ENCODE measurements at regions of chr7 and their contacts with region 1.

Region 1: DNA sequence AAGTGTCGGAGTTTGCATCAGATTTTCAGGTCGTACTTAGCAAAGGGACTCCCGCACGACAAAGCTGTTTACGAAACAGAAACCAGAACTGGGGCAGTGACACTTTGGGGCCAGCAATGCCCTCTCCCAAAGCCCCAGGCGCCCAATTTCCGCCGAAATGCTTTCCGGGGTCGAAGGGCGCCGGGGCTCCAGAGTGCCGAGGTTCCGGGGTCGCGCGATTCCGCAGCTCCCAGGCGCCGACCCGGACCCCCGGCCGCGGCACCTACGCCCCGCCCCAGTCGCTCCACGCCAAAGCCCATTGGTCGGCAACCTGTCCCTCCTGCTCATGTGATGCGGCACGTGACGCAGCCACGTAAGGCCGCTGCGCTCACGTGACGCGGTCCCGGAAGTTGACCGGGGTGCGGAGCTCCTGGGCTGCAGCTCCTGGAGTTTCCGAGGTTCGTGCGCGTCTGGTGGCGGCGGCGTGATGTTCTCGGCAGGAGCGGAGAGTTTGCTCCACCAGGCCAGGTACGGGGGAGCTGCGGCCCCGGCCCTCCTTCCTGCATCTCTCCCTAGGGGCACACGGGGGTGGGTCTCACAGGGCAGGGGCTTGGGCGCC is at the start of gene AP5Z1:
- DNase-seq: peak; percentile 98
- H3K4me3 Mint-ChIP-seq: peak within 1 kb of the TSS; percentile 97
- H3K27ac Mint-ChIP-seq: peak within 1 kb of the TSS; percentile 96
- H3K4me1 Mint-ChIP-seq: peaks cover 24% of the 10 kb centered on the region
- H3K27me3 Mint-ChIP-seq: no peaks in the 10 kb centered on the region
- CTCF ChIP-seq: no peak
- total RNA-seq, gene AP5Z1: 66.1 and 70.7 TPM in 2 replicates

Region 2: GRCh38 chr7:4282434-4283223 is 492.7 kb before region 1 on chr7:
- CTCF ChIA-PET with region 1: no interaction called
- intact Hi-C with region 1: no loop called
- DNase-seq: peak; percentile 59
- H3K4me3 Mint-ChIP-seq: no peak overlapping the region
- H3K27ac Mint-ChIP-seq: no peak overlapping the region
- H3K4me1 Mint-ChIP-seq: no peaks in the 10 kb centered on the region
- H3K27me3 Mint-ChIP-seq: no peaks in the 10 kb centered on the region
- CTCF ChIP-seq: no peak

Region 3: DNA sequence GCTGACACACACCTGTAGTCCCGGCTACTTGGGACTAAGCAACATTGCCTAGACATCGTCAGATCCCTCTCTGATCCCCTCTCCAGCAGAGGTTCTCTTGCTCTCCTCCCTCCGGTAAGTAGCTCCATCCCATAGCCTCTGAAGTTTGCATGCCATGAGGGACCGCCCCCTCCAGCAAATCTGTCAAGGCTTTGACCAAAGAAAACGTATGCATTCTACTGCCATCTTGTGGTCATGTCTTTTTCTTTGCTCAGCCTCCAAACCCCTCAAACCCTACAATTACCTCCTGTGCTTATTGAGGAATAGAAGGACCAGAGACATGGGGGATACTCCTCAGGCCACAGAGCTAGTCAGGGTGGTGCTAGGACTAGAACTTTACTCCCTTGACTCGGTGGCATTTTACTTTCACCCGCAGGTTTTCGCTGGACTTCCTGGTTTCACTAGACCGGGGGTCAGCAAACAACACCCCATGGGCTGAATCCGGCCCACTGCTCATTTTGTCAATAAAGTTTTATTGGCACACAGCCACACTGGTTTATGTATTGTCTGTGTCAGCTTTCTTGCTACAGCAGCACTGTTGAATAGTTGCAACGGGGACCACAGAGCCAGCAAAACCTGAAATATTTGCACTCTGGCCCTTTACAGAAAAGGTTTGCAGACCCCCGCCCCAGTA is 295.8 kb before region 1 on chr7:
- CTCF ChIA-PET with region 1: no interaction called
- intact Hi-C with region 1: no loop called
- DNase-seq: peak; percentile 74
- H3K4me3 Mint-ChIP-seq: no peak overlapping the region
- H3K27ac Mint-ChIP-seq: no peak overlapping the region
- H3K4me1 Mint-ChIP-seq: no peaks in the 10 kb centered on the region
- H3K27me3 Mint-ChIP-seq: peaks cover 46% of the 10 kb centered on the region
- CTCF ChIP-seq: peak; percentile 65

Region 4: DNA sequence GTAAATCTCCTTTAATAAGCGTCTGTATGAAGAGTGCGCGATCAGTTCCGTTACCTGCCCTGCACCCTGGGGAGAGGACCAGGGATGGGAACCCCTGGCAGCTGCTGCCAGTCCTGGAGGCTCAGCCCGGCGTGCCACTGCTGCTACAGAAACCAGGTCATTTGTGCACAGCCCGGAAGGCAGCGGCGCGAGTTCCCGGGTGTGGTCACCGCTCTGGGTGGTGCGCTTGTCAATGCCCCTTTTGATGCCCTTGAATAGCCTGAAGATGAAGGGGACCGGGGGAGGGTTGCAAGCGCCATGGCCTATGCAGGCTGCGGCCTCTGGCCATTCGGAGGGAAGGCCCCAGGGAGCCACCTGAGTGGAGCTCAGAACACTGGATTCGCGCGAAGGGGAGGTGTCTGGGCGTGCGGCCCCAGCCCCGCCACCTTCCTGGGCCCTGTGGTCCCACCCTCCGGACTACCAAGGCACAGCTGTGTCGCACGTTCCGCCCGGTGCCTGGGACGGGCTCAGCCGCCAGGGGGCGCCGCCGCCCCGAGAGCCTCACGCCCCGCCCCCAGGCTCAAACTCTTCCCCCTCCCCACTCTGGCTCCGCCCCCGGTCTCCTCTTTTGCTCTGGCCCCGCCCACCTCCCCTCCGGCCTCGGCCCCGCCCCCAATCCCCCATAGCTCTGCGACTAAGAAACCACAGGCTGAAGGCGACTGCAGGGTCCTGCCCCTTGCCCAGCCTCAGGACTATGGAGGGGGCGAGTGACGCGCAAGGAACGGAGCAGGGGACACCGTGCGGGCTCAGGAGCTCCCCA is 16.6 kb after region 1 on chr7:
- CTCF ChIA-PET with region 1: interaction called, 12 read pairs
- intact Hi-C with region 1: no loop called
- DNase-seq: no peak
- H3K4me3 Mint-ChIP-seq: no peak overlapping the region
- H3K27ac Mint-ChIP-seq: no peak overlapping the region
- H3K4me1 Mint-ChIP-seq: no peaks in the 10 kb centered on the region
- H3K27me3 Mint-ChIP-seq: no peaks in the 10 kb centered on the region
- CTCF ChIP-seq: peak; percentile 48